Adrenal gland (tissue), 19 donors: ENCODE measurements at regions of chr14 and their contacts with region 1.

Region 1: GRCh38 chr14:105682940-105683570 is 156.7 kb downstream of the TMEM121 start:
- DNase-seq: no peak
- H3K4me3 ChIP-seq: no peak overlapping the region
- H3K27ac ChIP-seq: no peak overlapping the region
- H3K4me1 ChIP-seq: no peaks in the 10 kb centered on the region
- H3K27me3 ChIP-seq: no peaks in the 10 kb centered on the region
- CTCF ChIP-seq: no peak
- POLR2A ChIP-seq: no peak

Region 2: DNA sequence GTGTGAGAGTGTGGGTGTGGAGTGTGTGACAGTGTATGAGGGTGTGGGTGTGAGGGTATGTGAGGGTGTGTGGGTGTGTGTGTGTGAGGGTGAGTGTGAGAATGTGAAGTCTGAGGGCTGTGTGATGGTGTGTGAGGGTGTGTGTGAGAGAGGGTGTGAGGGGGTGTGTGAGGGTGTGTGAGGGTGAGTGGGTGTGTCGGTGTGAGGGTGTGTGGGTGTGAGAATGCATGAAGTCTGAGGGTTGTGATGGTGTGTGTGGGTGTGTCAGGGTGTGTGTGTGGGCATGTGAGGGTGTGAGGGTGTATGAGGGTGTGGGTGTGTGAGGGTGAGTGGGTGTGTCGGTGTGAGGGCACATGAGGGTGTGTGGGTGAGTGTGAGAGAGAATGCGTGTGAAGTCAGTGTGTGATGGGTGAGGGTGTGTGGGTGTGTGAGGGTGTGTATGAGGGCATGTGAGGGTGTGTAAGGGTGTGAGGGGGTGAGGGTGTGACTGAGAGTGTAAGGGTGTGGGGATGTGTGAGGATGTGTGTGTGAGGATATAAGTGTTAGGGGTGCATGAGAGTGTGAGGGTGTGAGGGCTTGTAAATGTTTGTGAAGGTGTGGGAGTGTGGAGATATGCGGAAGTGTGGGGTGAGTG is 120.2 kb before region 1 on chr14:
- intact Hi-C with region 1: loop called in 1 of 2 experiments (anchors 10 kb)
- DNase-seq: no peak
- H3K4me3 ChIP-seq: no peak overlapping the region
- H3K27ac ChIP-seq: no peak overlapping the region
- H3K4me1 ChIP-seq: no peaks in the 10 kb centered on the region
- H3K27me3 ChIP-seq: no peaks in the 10 kb centered on the region
- CTCF ChIP-seq: no peak
- POLR2A ChIP-seq: no peak

Region 3: GRCh38 chr14:105944632-105945610 is 261.9 kb after region 1 on chr14:
- intact Hi-C with region 1: loop called in 1 of 2 experiments (anchors 10 kb)
- DNase-seq: peak; percentile 36 to 74 (median 71)
- H3K4me3 ChIP-seq: no peak overlapping the region
- H3K27ac ChIP-seq: no peak overlapping the region
- H3K4me1 ChIP-seq: no peaks in the 10 kb centered on the region
- H3K27me3 ChIP-seq: no peaks in the 10 kb centered on the region
- CTCF ChIP-seq: peak; percentile 63 to 82 (median 76)
- POLR2A ChIP-seq: no peak

Region 4: GRCh38 chr14:106013879-106014376 is 330.9 kb after region 1 on chr14:
- intact Hi-C with region 1: loop called in 1 of 2 experiments (anchors 10 kb)
- DNase-seq: no peak
- H3K4me3 ChIP-seq: no peak overlapping the region
- H3K27ac ChIP-seq: no peak overlapping the region
- H3K4me1 ChIP-seq: no peaks in the 10 kb centered on the region
- H3K27me3 ChIP-seq: peaks cover 9% of the 10 kb centered on the region
- CTCF ChIP-seq: no peak
- POLR2A ChIP-seq: no peak